BJ (cell line): ENCODE measurements at regions of chr1 and their contacts with region 1.

Region 1: GRCh38 chr1:9784508-9785133 is 39.1 kb downstream of the CLSTN1 start:
- DNase-seq: no peak
- H3K4me3 ChIP-seq: no peak overlapping the region
- H3K27me3 ChIP-seq: no peaks in the 10 kb centered on the region
- CTCF ChIP-seq: peak; percentile 66

Region 2: DNA sequence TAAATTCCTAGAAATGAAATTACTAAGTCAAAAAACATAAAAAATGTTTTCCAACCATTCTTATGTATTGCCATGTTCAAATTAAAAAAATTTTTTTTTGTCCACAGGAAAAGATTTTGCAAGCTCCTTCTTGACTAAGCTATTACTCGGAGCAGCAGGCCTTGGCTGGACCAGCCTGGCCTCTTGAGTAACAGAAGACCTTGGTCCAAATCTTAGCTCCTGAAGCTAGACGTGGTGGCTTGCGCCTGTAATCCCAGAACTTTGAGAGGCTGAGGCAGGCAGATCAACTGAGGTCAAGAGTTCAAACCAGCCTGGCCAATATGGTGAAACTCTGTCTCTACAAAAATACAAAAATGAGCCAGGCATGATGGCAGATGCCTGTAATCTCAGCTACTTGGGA is 38.4 kb before region 1 on chr1:
- CTCF ChIA-PET with region 1: no interaction called
- POLR2A ChIA-PET with region 1: no interaction called
- DNase-seq: no peak
- H3K4me3 ChIP-seq: no peak overlapping the region
- H3K27me3 ChIP-seq: no peaks in the 10 kb centered on the region
- CTCF ChIP-seq: no peak

Region 3: GRCh38 chr1:9861360-9861759 is 76.7 kb after region 1 on chr1:
- CTCF ChIA-PET with region 1: interaction called, 22 read pairs
- POLR2A ChIA-PET with region 1: no interaction called
- DNase-seq: no peak
- H3K4me3 ChIP-seq: no peak overlapping the region
- H3K27me3 ChIP-seq: no peaks in the 10 kb centered on the region
- CTCF ChIP-seq: no peak